A549 (cell line): ENCODE measurements at regions of chr17 and their contacts with region 1.

Region 1: DNA sequence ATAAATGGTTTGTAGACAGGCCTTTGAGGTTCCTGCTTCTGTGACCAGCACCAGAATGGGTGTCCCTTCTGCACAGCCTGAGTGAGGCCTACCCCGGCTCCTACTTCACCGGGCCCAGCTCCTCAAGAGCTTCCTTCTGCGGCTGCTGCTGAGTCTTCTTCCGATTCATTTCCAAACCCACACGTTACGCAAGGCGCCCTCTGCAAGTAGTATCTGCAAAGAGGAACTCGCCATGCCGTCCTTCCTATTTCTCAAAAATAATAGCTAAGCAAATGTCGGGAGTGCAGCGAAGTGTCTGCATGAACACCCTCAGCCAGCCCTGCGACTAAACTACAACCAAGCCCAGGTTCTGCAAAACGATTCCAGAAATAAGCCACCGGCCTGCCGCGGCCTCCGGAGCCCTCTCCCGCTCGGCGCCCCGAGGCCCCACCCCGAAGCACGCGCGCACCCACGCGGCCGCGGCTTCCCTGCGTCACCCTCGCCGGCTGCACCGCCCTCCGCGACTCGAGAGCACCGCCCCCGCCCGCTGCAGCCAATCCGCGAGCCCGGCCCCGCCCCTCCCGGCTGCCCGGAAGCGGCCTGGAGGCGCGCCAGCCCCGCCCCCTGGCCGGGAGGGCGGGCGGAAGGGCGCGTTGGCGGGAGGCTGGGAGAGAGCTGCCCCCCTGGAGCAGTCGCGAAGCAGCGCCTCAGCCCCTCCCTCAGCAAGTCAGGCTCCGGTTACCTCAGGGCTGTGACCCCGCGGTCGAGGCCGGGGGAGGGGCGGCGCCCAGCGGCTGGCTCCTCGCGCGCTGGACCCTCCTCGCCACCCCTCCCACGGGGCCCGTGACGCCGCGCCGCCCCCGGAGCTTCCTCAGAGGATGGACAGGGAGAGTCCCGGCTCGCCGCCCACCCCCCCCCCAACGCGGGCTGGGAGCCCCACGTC is 8.3 kb downstream of the MNT start:
- DNase-seq: peak; percentile 93 to 98
- ATAC-seq: peak; percentile 30 to 55
- H3K4me3 ChIP-seq: peak overlapping the region; percentile 66
- H3K27ac ChIP-seq: peak overlapping the region; percentile 97 to 99
- H3K4me1 ChIP-seq: peaks cover 43% of the 10 kb centered on the region
- CTCF ChIP-seq: no peak
- EP300 ChIP-seq: peak in 1 of 2 experiments; percentile 70; a peak in 2 of 5 replicates
- POLR2A ChIP-seq: peak; percentile 38
- RAD21 ChIP-seq: peak in 1 of 2 experiments; percentile 16; a peak in 1 of 5 replicates

Region 2: DNA sequence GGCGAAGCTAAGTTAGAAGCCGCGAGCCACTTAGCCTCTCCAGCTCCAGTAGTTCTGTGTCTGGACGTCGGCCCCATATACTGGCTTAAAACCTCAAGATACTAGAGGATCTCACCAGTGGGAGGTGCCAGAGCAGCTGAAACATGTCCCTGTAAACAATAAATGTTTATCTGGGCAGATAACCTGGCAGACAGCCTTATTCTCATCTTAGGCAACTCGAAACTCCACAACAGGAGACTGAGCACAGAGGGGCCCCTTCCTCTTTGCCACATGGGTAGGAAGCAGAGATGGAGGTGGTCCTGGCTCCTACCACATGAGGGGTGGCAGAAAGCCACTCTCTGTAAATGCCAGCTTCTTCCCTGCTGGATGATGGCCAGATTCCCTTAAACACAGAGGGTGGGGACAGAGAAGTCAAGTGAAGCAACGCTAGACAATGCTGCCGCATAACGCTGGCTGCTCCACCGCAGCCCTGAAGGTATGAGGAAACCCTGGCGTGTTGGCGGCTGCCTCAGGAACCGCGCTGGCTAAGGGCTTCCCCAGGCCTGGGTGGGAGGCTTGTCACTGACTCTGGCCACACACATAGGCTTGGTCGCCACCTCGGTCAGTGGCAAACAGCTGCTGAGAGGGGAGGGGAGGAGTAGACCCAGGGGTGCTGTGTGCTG is 269.7 kb before region 1 on chr17:
- CTCF ChIA-PET with region 1: no interaction called
- POLR2A ChIA-PET with region 1: no interaction called
- DNase-seq: no peak
- ATAC-seq: peak; percentile 32 to 58; a peak in 4 of 6 replicates
- H3K4me3 ChIP-seq: no peak overlapping the region
- H3K27ac ChIP-seq: no peak overlapping the region
- H3K4me1 ChIP-seq: peaks cover 4% of the 10 kb centered on the region; the same call in 2 of the 3 replicates
- CTCF ChIP-seq: no peak
- EP300 ChIP-seq: no peak
- POLR2A ChIP-seq: no peak
- RAD21 ChIP-seq: no peak

Region 3: GRCh38 chr17:2406903-2407790 is 14.6 kb after region 1 on chr17:
- CTCF ChIA-PET with region 1: interaction called, 1,099 read pairs
- POLR2A ChIA-PET with region 1: interaction called, 51 read pairs
- DNase-seq: peak; percentile 75 to 89
- ATAC-seq: peak; percentile 81 to 85
- H3K4me3 ChIP-seq: no peak overlapping the region
- H3K27ac ChIP-seq: peak overlapping the region; percentile 69 to 89
- H3K4me1 ChIP-seq: peaks cover 54% of the 10 kb centered on the region
- CTCF ChIP-seq: no peak
- EP300 ChIP-seq: no peak
- POLR2A ChIP-seq: no peak
- RAD21 ChIP-seq: no peak

Region 4: GRCh38 chr17:2435181-2435741 is 42.7 kb after region 1 on chr17:
- CTCF ChIA-PET with region 1: no interaction called
- POLR2A ChIA-PET with region 1: no interaction called
- DNase-seq: no peak
- ATAC-seq: no peak
- H3K4me3 ChIP-seq: no peak overlapping the region
- H3K27ac ChIP-seq: no peak overlapping the region
- H3K4me1 ChIP-seq: no peaks in the 10 kb centered on the region
- CTCF ChIP-seq: no peak
- EP300 ChIP-seq: no peak
- POLR2A ChIP-seq: no peak
- RAD21 ChIP-seq: no peak